HEK293 (cell line): ENCODE measurements at regions of chr11 and their contacts with region 1.

Region 1: GRCh38 chr11:67265633-67266423 is 445 bp upstream of the GRK2 start:
- H3K4me3 ChIP-seq: peak overlapping the region; percentile 20
- H3K27ac ChIP-seq: no peak overlapping the region; the same call in 1 of the 2 replicates
- H3K4me1 ChIP-seq: no peaks in the 10 kb centered on the region
- CTCF ChIP-seq: peak; percentile 49; the same call in 1 of the 2 replicates

Region 2: DNA sequence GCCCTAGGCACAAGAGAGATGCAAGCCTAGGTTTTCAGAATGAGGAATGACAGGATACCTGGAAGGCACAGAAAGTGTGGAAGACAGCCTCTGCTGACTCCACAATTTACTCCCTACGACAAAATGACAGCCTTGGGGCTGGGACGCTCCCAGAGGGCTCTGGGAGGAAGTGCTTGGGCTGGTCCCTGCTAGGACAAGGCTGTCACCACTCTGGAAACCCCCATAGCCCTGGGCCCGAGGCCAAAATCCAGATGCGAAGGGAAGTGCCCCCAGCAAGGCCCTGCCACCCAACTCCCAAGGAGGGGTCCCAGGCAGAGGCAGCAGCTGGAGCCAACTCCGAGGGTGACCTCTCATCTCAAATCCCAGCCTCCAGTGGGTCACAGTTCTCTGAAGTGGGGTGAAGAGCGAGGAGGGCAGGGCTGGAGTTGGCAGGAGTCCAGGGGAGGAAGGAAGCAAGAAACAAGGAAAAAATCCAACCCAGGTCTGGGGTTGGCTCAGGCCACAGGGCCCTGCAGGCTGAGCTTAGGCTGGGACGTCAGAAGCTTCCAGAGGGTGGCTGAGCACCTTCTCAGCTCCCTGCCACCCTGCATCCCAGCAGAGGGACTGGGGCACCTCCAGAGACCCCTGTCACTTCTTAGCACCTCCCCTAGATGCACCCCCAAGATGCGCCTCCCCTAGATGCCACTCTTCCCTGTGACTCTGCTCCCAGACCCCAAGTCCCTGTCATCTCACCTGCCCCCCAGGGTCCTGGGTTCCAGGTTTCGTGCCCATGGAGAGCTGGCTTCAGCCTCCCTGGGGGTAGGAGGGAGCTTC is 1957.3 kb before region 1 on chr11:
- CTCF ChIA-PET with region 1: no interaction called
- POLR2A ChIA-PET with region 1: no interaction called
- H3K4me3 ChIP-seq: no peak overlapping the region
- H3K27ac ChIP-seq: no peak overlapping the region
- H3K4me1 ChIP-seq: 0 out of 2 replicates have a peak, but pooled peaks cover 3% of the 10 kb centered on the region
- CTCF ChIP-seq: no peak

Region 3: DNA sequence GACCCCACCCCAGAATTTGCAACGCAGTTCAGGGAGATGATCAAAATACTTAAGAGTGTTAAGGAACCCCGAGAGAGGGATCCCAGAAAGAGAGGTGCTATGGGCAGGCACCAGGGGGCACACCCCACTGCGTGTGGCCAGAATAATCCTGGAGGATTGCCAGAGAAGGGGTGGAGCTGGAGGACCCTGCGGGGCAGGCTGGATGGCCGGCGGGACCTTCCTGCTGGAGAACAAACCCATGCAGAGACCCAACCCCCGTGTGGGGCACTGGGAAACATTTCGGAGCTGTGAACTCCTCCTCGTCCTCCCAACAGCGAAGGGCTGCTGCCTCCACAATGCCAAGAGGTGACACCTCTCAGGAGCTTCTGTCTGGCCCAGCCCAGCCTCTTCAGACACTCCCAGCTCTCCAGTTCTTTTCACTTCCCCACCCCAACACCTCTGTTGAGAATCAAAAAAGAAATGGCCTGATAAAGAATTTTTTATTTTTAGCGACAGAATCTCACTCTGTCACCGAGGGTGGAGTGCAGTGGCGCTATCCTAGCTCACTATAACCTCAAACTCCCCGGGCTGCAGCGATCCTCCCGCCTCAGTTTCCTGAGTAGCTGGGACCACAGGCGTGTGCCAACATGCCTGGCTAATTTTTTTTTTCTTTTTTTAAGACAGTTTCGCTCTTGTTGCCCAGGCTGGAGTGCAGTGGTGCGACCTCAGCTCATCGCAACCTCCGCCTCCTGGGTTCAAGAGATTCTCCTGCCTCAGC is 183.6 kb before region 1 on chr11:
- CTCF ChIA-PET with region 1: interaction called, 21 read pairs
- POLR2A ChIA-PET with region 1: no interaction called
- H3K4me3 ChIP-seq: no peak overlapping the region
- H3K27ac ChIP-seq: no peak overlapping the region
- H3K4me1 ChIP-seq: no peaks in the 10 kb centered on the region
- CTCF ChIP-seq: no peak

Region 4: DNA sequence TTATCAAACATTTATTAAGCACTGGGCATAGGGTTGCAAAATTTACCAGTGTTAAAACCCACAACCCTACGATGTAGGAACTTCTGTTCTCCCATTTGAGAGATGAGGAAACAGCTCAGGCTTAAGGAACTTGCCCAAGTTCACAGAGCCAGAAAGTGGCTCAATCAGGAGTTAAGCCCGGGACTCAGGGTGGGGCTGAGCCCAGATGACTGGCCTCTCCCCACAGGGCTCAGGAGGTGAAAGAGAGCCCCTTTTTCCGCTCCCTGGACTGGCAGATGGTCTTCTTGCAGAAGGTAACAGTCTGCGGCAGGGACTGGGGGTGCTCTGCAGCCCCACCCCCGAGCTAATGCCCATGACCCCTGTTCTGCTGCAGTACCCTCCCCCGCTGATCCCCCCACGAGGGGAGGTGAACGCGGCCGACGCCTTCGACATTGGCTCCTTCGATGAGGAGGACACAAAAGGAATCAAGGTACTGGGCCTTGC is 17.7 kb after region 1 on chr11:
- CTCF ChIA-PET with region 1: interaction called, 17 read pairs
- POLR2A ChIA-PET with region 1: interaction called, 3 read pairs
- H3K4me3 ChIP-seq: no peak overlapping the region
- H3K27ac ChIP-seq: no peak overlapping the region
- H3K4me1 ChIP-seq: no peaks in the 10 kb centered on the region
- CTCF ChIP-seq: no peak

Region 5: GRCh38 chr11:67303132-67303834 is 37.5 kb after region 1 on chr11 and contains the start of gene SSH3:
- CTCF ChIA-PET with region 1: interaction called, 14 read pairs
- POLR2A ChIA-PET with region 1: interaction called, 4 read pairs
- H3K4me3 ChIP-seq: peak within 1 kb of the TSS; percentile 66
- H3K27ac ChIP-seq: peak within 1 kb of the TSS; percentile 79; the same call in 1 of the 2 replicates
- H3K4me1 ChIP-seq: no peaks in the 10 kb centered on the region
- CTCF ChIP-seq: no peak

Region 6: DNA sequence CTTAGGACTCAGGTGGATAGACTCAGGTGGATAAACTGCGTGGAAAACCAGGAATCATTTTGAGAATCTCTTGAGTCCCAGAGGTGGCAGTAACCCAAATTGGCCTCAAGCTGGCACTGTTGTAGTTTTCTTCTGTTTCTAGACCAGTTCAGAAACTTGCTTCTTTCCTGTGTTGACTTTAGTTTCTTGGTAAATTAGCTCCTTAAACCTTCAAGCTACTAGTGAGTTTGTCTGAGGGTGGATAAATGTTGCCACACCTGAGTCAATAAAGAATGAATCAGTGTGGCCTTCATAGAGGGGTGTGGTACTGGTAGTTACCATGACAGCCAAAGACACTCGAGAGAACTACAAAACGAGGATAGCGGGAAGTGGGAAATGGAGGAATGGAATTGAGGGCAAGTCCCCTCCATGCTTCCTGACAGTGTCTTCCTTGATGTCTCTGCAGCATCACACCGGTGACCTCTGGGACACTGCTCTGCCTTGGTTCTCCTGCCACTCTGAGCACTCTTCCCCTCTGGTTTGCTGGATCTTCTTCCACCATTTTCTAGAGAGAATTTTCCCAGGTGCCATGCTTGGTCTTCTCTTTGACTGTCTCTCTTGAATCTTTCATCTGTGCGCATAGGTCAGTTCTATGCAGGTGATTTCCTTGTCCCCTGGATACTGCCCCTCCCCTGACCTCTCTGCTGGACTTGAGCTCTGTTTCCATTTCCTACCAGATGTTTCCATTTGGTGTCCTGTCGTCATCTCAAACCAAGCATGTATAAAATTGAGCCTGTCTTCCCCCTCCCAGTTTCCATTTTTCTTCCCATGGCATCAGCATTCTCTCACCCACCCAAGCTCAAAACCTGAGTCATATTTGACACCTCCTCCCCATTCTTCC is 80.3 kb after region 1 on chr11:
- CTCF ChIA-PET with region 1: interaction called, 18 read pairs
- POLR2A ChIA-PET with region 1: no interaction called
- H3K4me3 ChIP-seq: no peak overlapping the region
- H3K27ac ChIP-seq: no peak overlapping the region
- H3K4me1 ChIP-seq: no peaks in the 10 kb centered on the region
- CTCF ChIP-seq: peak; percentile 46; the same call in 1 of the 2 replicates

Region 7: GRCh38 chr11:67382276-67383136 is 116.7 kb after region 1 on chr11:
- CTCF ChIA-PET with region 1: interaction called, 43 read pairs
- POLR2A ChIA-PET with region 1: no interaction called
- H3K4me3 ChIP-seq: no peak overlapping the region
- H3K27ac ChIP-seq: no peak overlapping the region
- H3K4me1 ChIP-seq: no peaks in the 10 kb centered on the region
- CTCF ChIP-seq: peak; percentile 92

Region 8: DNA sequence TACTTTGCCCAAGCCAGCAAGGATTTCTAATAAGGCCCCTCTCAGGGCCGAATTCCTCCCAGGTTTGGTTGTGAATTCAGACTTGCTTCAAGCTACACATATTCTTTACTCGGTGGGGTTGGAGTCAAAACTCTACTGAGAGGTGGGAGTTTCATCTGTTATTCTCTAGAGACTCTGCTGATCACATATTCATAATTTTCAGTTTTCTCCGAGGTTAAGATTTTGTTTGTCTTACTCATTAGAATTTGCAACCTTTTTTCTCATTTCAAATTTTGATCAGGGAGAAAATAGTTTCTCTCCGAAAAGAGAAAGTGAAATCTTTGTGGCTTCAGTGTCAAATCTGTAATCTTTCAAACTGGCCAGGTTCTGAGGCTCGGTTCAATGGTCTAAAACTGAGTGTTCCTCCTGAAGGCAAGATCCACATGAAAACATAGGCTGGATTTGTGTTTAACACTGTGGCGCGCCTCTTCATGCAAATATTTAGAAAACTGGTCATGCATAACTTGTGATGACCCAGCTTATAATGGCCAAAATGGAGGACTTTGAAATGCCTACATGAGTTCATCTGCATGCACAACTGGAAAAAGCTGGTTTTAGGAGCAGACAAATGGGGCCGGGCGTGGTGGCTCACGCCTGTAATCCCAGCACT is 296.3 kb after region 1 on chr11:
- CTCF ChIA-PET with region 1: no interaction called
- POLR2A ChIA-PET with region 1: no interaction called
- H3K4me3 ChIP-seq: no peak overlapping the region
- H3K27ac ChIP-seq: no peak overlapping the region
- H3K4me1 ChIP-seq: no peaks in the 10 kb centered on the region
- CTCF ChIP-seq: no peak